ENCODE measurements at regions of chr3 and their contacts with region 1.

Region 1: DNA sequence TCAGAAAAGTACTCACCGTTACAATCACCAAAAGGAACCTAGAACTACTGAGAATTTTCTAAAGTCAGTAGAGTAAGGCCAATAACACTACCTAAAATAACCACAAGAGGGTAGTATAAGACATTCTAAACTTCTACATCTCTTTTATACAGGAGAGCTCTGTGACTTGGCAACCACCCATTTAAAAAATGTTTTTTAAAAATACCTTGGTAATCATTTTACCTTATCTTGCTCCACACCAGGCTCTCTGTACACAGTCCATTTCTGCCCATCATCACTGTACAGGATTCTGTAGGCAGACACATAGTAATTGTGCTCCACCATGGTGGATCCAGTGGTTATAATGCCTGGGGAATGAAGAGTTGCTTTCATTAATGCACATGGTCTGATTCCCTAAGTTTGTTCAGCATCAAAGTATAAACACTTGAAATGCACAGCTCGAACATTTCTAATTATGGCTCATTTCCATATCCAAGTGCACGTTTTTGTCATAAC is 54.5 kb downstream of the ST3GAL6 start:
- DNase-seq: no peak
- ATAC-seq: peak; percentile 68
- H3K4me3 Mint-ChIP-seq: no peak overlapping the region
- H3K27ac Mint-ChIP-seq: no peak overlapping the region
- H3K4me1 Mint-ChIP-seq: no peaks in the 10 kb centered on the region
- H3K27me3 Mint-ChIP-seq: no peaks in the 10 kb centered on the region
- CTCF ChIP-seq: peak; percentile 20

Region 2: DNA sequence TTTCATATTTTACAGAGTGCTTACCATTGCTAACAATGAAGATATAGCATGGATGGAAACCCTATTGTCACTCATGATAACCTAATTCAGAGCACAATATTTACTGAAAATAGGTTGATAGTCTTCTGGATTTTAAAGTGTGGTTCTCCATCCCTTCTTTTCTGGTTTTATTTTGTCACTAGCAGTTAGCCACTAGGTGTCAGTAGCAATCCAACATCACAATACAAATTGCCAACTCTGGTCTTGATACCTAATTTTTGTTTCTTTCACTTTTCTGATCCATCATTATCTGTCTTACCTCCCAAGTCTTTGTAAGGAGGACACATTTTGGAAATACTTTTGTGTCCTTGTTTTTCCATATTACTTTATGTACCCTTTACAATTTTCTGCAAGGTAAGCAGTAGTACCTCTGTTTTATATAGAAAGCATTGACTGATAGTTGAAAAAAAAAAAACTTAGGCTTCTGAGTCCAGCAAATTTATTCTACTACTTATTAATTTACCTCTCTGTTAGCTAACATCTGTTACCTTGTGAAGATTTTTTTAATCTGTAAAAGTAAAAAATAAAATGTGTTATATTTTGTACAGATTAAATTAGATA is 1024.1 kb before region 1 on chr3:
- CTCF ChIA-PET with region 1: no interaction called
- POLR2A ChIA-PET with region 1: no interaction called
- intact Hi-C with region 1: loop called (anchors 2 kb)
- DNase-seq: no peak
- ATAC-seq: no peak
- H3K4me3 Mint-ChIP-seq: no peak overlapping the region
- H3K27ac Mint-ChIP-seq: no peak overlapping the region
- H3K4me1 Mint-ChIP-seq: no peaks in the 10 kb centered on the region
- H3K27me3 Mint-ChIP-seq: no peaks in the 10 kb centered on the region
- CTCF ChIP-seq: no peak

Region 3: DNA sequence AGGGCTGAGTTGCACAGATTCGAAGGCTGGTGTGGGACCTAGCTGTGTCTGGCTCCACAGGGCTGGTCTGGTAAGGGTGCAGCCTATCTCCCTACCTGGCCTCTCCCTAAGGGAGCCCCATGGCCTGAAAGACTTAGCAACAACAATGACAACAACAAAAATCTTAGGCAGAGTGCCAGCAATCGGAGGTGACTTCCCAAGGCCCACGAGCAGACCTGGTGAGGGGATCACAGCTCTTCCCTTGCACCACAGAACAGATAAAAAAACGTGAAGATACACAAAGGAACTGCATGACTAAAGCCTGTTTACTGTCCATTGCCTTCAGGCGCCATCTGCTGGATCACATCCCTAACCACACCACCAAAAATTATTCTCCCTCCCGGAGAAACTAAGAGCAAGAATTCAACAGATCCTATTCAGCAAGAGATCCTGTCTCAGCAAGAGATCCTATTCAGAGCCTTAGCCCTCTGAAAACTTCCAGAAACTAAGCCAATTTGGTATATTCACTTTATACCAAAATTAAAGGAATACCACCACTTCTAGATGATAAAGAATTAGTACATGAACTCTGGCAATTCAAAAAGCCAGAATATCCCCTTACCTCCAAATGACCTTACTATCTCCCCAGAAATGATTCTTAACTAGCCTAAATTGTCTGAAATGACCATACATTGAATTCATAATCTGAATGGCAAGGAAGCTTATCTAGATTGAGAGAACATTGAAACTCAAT is 488.0 kb before region 1 on chr3:
- CTCF ChIA-PET with region 1: no interaction called
- POLR2A ChIA-PET with region 1: no interaction called
- intact Hi-C with region 1: loop called (anchors 5 kb)
- DNase-seq: no peak
- ATAC-seq: no peak
- H3K4me3 Mint-ChIP-seq: no peak overlapping the region
- H3K27ac Mint-ChIP-seq: no peak overlapping the region
- H3K4me1 Mint-ChIP-seq: no peaks in the 10 kb centered on the region
- H3K27me3 Mint-ChIP-seq: peaks cover 6% of the 10 kb centered on the region
- CTCF ChIP-seq: no peak

Region 4: DNA sequence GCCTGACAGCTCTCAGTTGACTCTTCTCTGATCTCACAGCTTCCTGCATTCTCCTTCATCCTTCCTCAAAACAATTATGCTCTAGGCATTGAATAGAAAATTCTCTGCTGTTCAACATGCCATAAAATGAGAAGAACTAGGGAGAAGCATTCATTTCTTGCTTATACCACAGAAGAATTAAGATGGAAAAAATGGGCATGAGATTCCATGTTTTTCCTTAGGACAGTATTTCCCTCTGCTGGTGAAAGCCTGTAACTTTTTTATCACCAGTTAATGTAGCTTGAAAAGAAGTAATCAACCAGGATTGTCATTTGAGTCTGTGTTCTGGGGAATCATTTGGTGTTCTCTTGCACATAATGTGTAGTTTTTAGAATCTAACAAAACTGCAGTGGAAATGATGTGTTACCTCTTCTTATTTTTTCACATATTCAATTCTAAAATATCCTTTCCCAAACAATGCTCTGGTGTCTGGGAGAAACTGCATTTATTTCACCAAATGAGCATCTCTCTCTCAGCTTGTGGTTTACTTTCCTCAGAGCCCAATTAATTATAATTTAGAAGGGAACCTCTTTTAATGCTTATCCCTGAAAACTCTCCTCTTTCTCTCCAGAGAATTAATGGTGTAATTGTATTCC is 176.7 kb after region 1 on chr3:
- CTCF ChIA-PET with region 1: no interaction called
- POLR2A ChIA-PET with region 1: no interaction called
- intact Hi-C with region 1: loop called (anchors 1 kb)
- DNase-seq: no peak
- ATAC-seq: no peak
- H3K4me3 Mint-ChIP-seq: no peak overlapping the region
- H3K27ac Mint-ChIP-seq: no peak overlapping the region
- H3K4me1 Mint-ChIP-seq: no peaks in the 10 kb centered on the region
- H3K27me3 Mint-ChIP-seq: no peaks in the 10 kb centered on the region
- CTCF ChIP-seq: no peak

Region 5: DNA sequence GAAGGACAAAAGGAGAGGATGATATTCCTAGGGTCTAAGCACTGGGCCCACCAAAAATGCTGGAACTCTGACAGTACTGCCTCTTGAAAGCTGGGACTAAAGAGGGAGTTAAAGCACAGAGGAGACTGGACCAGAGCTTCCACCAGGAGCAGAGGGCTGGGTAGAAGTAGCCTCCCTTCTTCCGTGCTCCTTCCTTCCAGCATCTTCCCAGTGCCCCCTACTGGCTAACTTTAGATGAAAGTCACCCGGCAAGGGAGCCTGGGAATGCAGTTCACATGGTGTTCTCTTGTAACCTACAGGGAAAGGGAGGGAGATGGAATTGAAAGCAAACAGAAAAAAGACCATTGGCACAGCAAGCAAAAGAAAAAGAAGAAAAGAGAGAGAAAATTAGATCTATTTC is 714.7 kb after region 1 on chr3:
- CTCF ChIA-PET with region 1: no interaction called
- POLR2A ChIA-PET with region 1: no interaction called
- intact Hi-C with region 1: loop called (anchors 5 kb)
- DNase-seq: no peak
- ATAC-seq: no peak
- H3K4me3 Mint-ChIP-seq: no peak overlapping the region
- H3K27ac Mint-ChIP-seq: no peak overlapping the region
- H3K4me1 Mint-ChIP-seq: no peaks in the 10 kb centered on the region
- H3K27me3 Mint-ChIP-seq: peaks cover 2% of the 10 kb centered on the region
- CTCF ChIP-seq: no peak

Region 6: DNA sequence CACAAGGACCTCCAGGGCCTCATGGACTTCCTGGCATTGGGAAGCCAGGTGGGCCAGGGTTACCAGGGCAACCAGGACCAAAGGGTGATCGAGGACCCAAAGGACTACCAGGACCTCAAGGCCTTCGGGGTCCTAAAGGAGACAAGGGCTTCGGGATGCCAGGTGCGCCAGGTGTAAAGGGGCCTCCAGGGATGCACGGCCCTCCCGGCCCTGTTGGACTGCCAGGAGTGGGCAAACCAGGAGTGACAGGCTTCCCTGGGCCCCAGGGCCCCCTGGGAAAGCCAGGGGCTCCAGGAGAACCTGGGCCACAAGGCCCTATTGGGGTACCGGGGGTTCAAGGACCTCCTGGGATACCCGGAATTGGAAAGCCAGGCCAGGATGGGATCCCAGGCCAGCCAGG is 976.9 kb after region 1 on chr3:
- CTCF ChIA-PET with region 1: no interaction called
- POLR2A ChIA-PET with region 1: no interaction called
- intact Hi-C with region 1: no loop called
- DNase-seq: no peak
- ATAC-seq: no peak
- H3K4me3 Mint-ChIP-seq: no peak overlapping the region
- H3K27ac Mint-ChIP-seq: no peak overlapping the region
- H3K4me1 Mint-ChIP-seq: no peaks in the 10 kb centered on the region
- H3K27me3 Mint-ChIP-seq: peaks cover 5% of the 10 kb centered on the region
- CTCF ChIP-seq: no peak

Region 7: GRCh38 chr3:99808151-99808794 is 990.7 kb after region 1 on chr3:
- CTCF ChIA-PET with region 1: interaction called, 5 read pairs
- POLR2A ChIA-PET with region 1: no interaction called
- intact Hi-C with region 1: loop called (anchors 1 kb)
- DNase-seq: no peak
- ATAC-seq: peak; percentile 45
- H3K4me3 Mint-ChIP-seq: no peak overlapping the region
- H3K27ac Mint-ChIP-seq: no peak overlapping the region
- H3K4me1 Mint-ChIP-seq: no peaks in the 10 kb centered on the region
- H3K27me3 Mint-ChIP-seq: no peaks in the 10 kb centered on the region
- CTCF ChIP-seq: peak; percentile 90